ENCODE measurements at regions of chr17 and their contacts with region 1.

Region 1: DNA sequence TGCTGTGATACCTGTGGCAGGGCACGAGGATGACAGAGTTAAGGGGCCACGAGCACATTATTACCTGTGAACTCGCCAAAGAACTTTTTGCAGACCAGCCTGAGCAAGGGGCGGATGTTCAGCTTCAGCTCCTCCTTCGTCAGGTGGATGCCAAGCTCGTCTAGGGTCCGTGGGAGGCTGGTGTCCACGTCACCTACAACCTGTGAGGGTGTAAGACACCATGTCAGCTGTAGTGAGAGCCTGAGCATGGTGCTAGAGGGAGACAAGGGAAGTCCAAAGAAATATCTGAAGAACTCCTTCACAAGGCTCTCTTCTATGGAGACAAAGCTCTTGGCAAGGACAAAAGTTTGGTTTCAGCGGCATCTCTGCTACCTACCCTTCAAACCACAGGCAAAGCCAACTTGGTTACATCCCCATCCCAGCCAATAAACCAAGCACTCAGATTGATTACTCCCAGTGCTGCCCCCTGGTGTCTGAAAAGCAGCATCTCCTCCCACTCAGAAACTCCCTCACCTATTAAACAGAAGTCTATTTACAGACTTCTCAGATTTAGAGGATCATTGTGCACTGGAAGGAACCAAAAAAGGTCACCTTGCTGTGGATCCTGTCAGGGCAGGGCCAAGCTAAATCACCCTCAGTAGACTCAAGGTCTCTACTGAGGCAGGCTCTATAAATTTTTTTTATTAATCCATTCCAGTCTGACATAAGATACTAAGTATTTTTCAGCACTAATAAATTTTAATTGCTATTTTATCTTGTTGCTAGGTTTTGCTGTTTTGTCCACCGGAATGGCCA is 17.4 kb downstream of the HIGD1B start:
- DNase-seq: peak; percentile 29 to 90 (median 72)

Region 2: GRCh38 chr17:44599298-44600175 is 265.5 kb before region 1 on chr17:
- intact Hi-C with region 1: no loop called
- DNase-seq: peak in 10 of 42 donors; percentile 3 to 74 (median 18)

Region 3: DNA sequence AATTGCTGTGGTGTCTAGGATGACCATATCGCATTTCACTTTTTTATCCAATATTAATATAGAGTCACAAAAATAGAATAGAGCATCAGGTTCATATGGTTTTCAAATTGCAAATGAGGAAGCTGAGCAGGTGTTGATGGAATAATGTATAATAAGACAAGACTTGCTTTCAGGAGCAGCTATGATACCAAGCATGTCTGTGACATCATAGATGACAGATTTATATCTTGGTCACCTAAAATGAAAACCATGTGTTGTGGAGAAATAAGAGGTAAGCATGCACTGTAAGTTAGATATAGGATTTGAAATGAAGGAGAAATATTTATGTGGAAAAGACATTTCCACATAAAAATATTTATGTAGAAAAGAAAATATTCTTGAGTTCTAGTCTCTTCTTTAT is 200.2 kb before region 1 on chr17:
- intact Hi-C with region 1: no loop called
- DNase-seq: no peak

Region 4: GRCh38 chr17:44779211-44780025 is 85.6 kb before region 1 on chr17:
- intact Hi-C with region 1: loop called (anchors 2 kb)
- DNase-seq: peak; percentile 81 to 96 (median 90)